GM12878 (cell line): ENCODE measurements at regions of chr9 and their contacts with region 1.

Region 1: DNA sequence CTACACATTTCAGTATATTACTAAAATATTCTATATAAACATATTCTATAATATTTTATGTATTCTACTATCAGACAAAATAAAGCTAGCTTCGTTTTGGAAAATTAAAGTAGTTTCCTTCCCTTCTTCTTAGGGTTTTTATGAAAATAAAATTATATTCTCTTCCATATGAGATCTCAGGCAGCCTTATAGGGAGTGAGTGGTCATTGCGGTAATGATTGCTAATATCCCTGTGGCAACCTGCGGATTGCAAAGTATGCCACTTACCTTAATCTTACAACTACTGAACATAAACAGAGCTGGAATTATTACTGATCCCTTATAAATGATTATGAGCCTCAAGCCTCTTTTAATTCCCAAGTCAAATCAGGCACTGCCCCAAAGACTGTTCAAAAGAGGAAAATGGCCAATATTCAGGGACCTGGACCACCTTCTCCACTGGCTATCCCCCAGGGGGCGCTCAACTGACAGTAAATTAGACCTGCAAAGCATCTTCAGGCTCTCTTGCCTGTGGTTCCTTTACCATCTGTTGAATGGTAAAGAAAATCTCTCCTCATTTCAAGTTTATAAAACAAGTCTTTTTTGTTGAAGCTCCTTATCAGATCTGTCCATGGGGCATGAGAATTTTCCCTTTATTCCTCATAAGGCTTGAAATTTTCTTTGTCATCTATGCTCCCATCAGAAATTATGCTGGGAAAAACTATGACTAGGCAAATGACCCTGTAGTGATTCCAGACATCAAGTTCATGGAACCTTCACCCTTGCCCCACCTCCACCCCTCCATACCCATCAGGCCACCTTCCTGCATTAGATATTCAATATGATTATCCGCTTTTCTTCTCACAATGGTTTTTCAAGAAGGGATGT is 163.9 kb downstream of the CEMIP2 start:
- DNase-seq: no peak
- ATAC-seq: peak; percentile 93
- H3K4me3 ChIP-seq: no peak overlapping the region
- H3K27ac ChIP-seq: no peak overlapping the region
- H3K4me1 ChIP-seq: no peaks in the 10 kb centered on the region
- H3K27me3 ChIP-seq: no peaks in the 10 kb centered on the region
- CTCF ChIP-seq: peak; percentile 60 to 74 (median 62)
- EP300 ChIP-seq: no peak
- POLR2A ChIP-seq: no peak
- RAD21 ChIP-seq: peak; percentile 75

Region 2: GRCh38 chr9:71675129-71675856 is 70.9 kb after region 1 on chr9:
- CTCF ChIA-PET with region 1: no interaction called
- POLR2A ChIA-PET with region 1: no interaction called
- RAD21 ChIA-PET with region 1: no interaction called
- SMC1A ChIA-PET with region 1: no interaction called
- in situ Hi-C with region 1: loop called (anchors 10 kb)
- intact Hi-C with region 1: no loop called
- DNase-seq: no peak
- ATAC-seq: peak; percentile 24; the same call in 1 of the 3 replicates
- H3K4me3 ChIP-seq: no peak overlapping the region
- H3K27ac ChIP-seq: no peak overlapping the region
- H3K4me1 ChIP-seq: no peaks in the 10 kb centered on the region
- H3K27me3 ChIP-seq: no peaks in the 10 kb centered on the region
- CTCF ChIP-seq: no peak
- EP300 ChIP-seq: no peak
- POLR2A ChIP-seq: no peak
- RAD21 ChIP-seq: no peak

Region 3: GRCh38 chr9:71683598-71684235 is 79.3 kb after region 1 on chr9:
- CTCF ChIA-PET with region 1: no interaction called
- POLR2A ChIA-PET with region 1: no interaction called
- RAD21 ChIA-PET with region 1: no interaction called
- SMC1A ChIA-PET with region 1: interaction called, 4 read pairs
- in situ Hi-C with region 1: loop called (anchors 10 kb)
- intact Hi-C with region 1: loop called (anchors 5 kb)
- DNase-seq: no peak
- ATAC-seq: no peak
- H3K4me3 ChIP-seq: no peak overlapping the region
- H3K27ac ChIP-seq: no peak overlapping the region
- H3K4me1 ChIP-seq: no peaks in the 10 kb centered on the region
- H3K27me3 ChIP-seq: no peaks in the 10 kb centered on the region
- CTCF ChIP-seq: no peak
- EP300 ChIP-seq: no peak
- POLR2A ChIP-seq: no peak
- RAD21 ChIP-seq: no peak

Region 4: DNA sequence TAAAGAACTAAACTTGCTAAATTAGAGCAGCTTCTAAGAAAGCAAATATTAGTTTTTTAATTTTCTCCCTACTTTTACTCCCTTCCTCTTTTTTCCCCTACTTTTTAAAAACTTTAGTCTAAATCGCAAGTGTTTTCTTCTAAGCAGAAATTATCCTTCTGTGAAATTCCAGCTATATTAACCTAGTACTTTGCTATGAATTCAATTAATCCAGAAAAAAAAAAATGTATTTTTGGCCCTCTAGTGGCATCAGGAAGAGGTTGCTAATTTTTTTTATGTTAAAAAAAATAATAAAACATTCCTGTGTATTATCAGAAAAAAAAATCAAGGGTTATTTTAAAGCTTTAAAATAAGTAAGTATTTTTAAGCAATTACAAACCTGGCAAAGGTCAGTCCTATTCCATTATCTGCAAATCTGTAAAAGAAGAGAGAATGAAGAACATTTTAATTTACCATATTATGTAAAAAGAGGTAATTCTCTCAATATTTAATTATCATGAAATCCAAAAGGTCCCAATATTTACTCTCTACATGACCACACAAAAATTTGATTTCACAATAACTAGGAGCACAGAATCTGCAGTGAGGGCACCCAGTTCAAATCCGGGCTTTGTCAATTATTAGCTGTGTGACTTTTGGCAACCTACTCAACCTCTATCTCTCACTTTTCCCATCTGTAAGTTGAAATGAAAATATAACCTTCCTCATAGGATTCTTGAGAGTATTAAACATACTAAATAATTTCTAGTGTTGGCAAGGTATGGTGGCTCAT is 111.9 kb after region 1 on chr9:
- CTCF ChIA-PET with region 1: interaction called, 12 read pairs
- POLR2A ChIA-PET with region 1: no interaction called
- RAD21 ChIA-PET with region 1: interaction called, 7 read pairs
- SMC1A ChIA-PET with region 1: interaction called, 8 read pairs
- in situ Hi-C with region 1: no loop called
- intact Hi-C with region 1: loop called (anchors 2 kb)
- DNase-seq: no peak
- ATAC-seq: no peak
- H3K4me3 ChIP-seq: no peak overlapping the region
- H3K27ac ChIP-seq: no peak overlapping the region
- H3K4me1 ChIP-seq: no peaks in the 10 kb centered on the region
- H3K27me3 ChIP-seq: no peaks in the 10 kb centered on the region
- CTCF ChIP-seq: peak in 2 of 3 experiments; percentile 17 to 25; a peak in 3 of 6 replicates
- EP300 ChIP-seq: no peak
- POLR2A ChIP-seq: no peak
- RAD21 ChIP-seq: no peak